ENCODE measurements at regions of chr17 and their contacts with region 1.

Region 1: DNA sequence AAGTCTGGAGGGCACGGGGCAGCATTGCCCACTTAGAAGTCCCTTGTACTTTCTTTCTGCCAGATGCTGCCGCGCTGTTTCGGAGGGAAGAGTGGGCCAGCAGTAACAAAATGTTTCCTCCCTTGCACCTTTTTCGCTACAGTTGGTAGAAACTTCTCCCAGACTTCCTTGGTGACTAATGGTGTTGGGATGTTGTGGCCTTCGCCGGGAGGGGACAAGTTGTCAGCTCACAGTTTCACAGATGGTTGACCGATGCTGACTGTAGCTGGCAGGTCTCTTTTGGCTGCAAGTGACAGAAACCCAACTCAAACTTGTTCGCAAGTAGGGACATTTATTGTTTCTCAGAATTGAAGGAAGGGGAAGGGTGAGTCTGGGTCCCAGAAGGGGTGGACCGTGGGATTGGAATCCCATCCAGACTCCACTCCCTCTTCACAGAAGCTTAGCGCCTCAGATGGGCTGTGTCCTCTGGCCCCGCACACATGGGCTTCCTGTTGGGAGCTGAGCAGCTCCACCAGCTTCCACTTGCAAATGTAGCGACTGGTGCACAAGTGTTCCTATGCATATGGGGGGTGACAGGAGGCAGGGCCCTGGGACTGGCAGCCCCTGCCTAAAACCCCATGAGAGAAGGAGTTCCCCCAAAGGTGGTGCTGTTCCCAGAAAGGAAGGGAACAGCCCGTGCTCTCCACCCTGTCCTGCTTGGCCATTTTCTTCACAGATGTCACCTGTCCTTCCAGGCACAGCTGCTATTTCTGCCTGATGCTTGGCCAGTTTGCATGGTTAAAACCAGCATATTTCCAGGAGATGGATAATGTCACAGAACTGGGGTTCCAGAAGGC is 30.9 kb upstream of the RPRML start:
- DNase-seq: no peak
- H3K4me3 ChIP-seq: no peak overlapping the region
- H3K27ac ChIP-seq: no peak overlapping the region
- H3K27me3 ChIP-seq: no peaks in the 10 kb centered on the region
- CTCF ChIP-seq: no peak

Region 2: DNA sequence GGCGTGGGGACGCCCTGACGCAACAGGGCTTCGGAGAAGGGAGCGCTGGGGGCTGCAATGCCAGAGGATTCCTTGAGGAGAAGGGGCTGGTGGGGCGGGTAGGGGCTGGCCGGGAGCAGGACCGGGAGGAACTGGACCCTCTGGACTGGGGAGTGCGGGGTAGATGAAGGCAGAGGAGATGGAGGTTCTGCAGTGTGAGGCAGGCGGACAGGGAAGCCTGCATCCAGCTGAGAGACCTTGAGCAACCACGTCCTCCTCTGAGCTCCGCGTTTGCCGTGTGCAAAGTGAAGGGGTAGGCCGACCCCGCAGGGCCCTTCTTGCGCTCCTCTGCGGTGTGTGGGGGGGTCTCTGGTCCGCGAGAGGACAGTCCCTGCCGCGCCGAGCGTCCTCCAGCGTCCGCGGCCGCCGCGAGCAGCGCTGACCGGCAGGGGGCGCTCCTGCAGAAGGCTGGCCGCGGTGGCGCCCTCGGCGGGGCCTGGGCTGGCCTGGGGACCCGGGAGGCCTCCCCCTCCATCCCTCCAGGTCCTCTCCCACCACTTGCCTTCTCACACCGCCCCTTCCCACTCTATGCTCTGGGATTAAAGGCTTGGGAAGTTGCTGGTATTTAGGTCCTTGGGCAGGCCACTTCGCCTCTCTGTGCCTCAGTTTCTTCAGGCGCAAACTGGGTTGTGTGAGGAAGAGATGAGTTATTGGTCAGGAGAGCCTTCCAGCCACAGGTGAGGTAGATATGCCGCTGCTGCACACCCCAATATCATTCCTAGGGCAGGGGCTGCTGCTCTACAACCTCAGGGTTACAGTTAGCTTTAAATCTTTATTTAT is 168.2 kb before region 1 on chr17:
- intact Hi-C with region 1: loop called in 1 of 2 experiments (anchors 10 kb)
- DNase-seq: peak in 1 of 10 donors; percentile 48
- H3K4me3 ChIP-seq: peak overlapping the region in 54 of 59 donors; percentile 14 to 63 (median 45)
- H3K27ac ChIP-seq: no peak overlapping the region
- H3K27me3 ChIP-seq: peaks cover 0 to 23% (median 0%) of the 10 kb centered on the region in 45 donors
- CTCF ChIP-seq: peak in 55 of 56 donors; percentile 42 to 85 (median 72)